ENCODE measurements at regions of chr17 and their contacts with region 1.

Region 1: GRCh38 chr17:29931231-29931932 is 1.4 kb upstream of the SSH2 start:
- DNase-seq: peak; percentile 53 to 68
- H3K4me3 ChIP-seq: peak overlapping the region; percentile 73; the same call in 1 of the 2 replicates
- H3K27ac ChIP-seq: no peak overlapping the region
- H3K4me1 ChIP-seq: peaks cover 32% of the 10 kb centered on the region
- H3K27me3 ChIP-seq: no peaks in the 10 kb centered on the region
- CTCF ChIP-seq: peak; percentile 95

Region 2: GRCh38 chr17:29579866-29580771 is 351.3 kb before region 1 on chr17:
- CTCF ChIA-PET with region 1: interaction called, 3 read pairs
- POLR2A ChIA-PET with region 1: no interaction called
- intact Hi-C with region 1: loop called (anchors 1 kb)
- DNase-seq: peak; percentile 69 to 83
- H3K4me3 ChIP-seq: no peak overlapping the region
- H3K27ac ChIP-seq: no peak overlapping the region
- H3K4me1 ChIP-seq: no peaks in the 10 kb centered on the region
- H3K27me3 ChIP-seq: no peaks in the 10 kb centered on the region
- CTCF ChIP-seq: peak; percentile 87

Region 3: DNA sequence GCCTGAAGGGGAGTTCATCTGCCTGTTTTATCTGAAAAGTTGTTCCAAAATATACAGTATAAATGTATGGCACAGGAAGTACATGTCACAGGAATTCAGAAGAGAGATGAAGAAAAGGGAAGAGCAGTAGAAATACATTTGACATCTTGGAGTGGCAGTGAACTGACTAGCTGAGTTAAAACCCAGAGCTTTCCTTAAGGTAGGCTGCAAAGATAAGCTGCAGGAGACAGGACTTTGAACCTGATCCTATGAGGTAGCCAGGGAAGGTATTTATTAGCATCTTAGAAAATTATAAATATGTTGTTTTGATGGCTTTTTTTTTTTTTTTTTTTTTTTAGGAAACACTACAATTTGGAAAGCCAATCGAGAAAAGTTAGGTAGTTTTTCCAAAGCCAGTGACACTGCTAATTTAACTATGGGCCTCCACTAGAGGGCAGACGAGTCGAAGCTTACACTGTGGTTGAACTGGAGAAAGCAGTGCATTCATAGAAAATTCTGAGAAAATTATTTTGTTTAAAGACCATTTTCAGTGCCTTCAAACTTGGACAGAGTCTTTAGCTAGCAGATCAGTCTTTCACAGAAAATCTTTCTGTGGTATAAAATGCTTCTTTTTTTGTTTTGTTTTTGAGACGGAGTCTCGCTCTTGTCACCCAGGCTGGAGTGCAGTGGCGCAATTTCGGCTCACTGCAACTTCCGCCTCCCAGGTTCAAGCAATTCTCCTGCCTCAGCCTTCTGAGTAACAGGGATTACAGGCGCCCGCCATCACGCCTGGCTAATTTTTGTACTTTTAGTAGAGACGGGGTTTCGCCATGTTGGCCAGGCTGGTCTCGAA is 123.6 kb before region 1 on chr17:
- CTCF ChIA-PET with region 1: interaction called, 30 read pairs
- POLR2A ChIA-PET with region 1: no interaction called
- intact Hi-C with region 1: loop called (anchors 1 kb)
- DNase-seq: peak in 1 of 2 experiments; percentile 55
- H3K4me3 ChIP-seq: no peak overlapping the region
- H3K27ac ChIP-seq: no peak overlapping the region
- H3K4me1 ChIP-seq: no peaks in the 10 kb centered on the region
- H3K27me3 ChIP-seq: no peaks in the 10 kb centered on the region
- CTCF ChIP-seq: peak; percentile 87

Region 4: DNA sequence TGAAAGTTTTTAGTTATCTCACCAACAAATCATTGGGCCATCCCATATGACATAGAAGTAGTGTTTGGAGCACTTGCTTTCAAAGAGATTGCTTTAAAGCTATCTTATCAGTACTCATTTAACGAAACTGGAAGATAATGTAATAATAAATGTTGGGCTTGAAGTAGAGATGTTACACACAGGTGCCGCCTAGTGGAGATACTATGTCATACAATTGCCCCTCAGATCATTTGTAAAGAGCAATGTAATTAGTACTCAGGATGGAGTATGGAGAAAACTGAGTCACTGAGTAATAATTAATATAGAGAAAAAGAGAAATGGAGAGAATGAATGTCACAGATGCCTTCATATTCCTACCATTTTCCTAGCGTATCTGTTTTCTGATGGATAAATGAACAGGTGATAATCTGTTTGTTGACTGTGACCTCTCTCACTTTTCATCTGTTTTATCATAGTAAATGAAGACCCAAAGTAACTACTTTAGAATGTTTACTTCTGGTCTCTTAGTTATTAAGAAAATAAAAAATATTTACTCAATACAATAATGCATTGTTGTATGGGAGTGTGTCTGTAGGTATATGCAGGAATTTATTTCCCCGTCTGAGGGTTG is 90.4 kb after region 1 on chr17:
- CTCF ChIA-PET with region 1: interaction called, 3 read pairs
- POLR2A ChIA-PET with region 1: interaction called, 22 read pairs
- intact Hi-C with region 1: loop called (anchors 1 kb)
- DNase-seq: peak in 1 of 2 experiments; percentile 14
- H3K4me3 ChIP-seq: no peak overlapping the region
- H3K27ac ChIP-seq: no peak overlapping the region
- H3K4me1 ChIP-seq: no peaks in the 10 kb centered on the region; the same call in 1 of the 2 replicates
- H3K27me3 ChIP-seq: no peaks in the 10 kb centered on the region
- CTCF ChIP-seq: peak; percentile 93

Measured in PC-9 (cell line).